Gastrocnemius medialis (tissue), 4 donors: ENCODE measurements at regions of chr2 and their contacts with region 1.

Region 1: GRCh38 chr2:135473567-135473966 is 57.5 kb downstream of the ZRANB3 start:
- DNase-seq: peak in 1 of 2 donors; percentile 24
- ATAC-seq: peak; percentile 60 to 83
- H3K4me3 ChIP-seq: no peak overlapping the region
- H3K27ac ChIP-seq: no peak overlapping the region
- H3K4me1 ChIP-seq: peaks cover 3 to 9% of the 10 kb centered on the region in 2 donors
- H3K27me3 ChIP-seq: no peaks in the 10 kb centered on the region
- CTCF ChIP-seq: peak; percentile 55 to 72 (median 59)
- POLR2A ChIP-seq: no peak

Region 2: GRCh38 chr2:135563793-135564192 is 90.2 kb after region 1 on chr2:
- in situ Hi-C with region 1: loop called in 1 of 4 experiments (anchors 25 kb)
- intact Hi-C with region 1: no loop called
- DNase-seq: no peak
- ATAC-seq: no peak
- H3K4me3 ChIP-seq: no peak overlapping the region
- H3K27ac ChIP-seq: no peak overlapping the region
- H3K4me1 ChIP-seq: peaks cover 3 to 4% of the 10 kb centered on the region in 2 donors
- H3K27me3 ChIP-seq: no peaks in the 10 kb centered on the region
- CTCF ChIP-seq: no peak
- POLR2A ChIP-seq: no peak

Region 3: GRCh38 chr2:135600915-135601314 is 127.3 kb after region 1 on chr2:
- in situ Hi-C with region 1: loop called in 1 of 4 experiments (anchors 25 kb)
- intact Hi-C with region 1: loop called (anchors 2 kb)
- DNase-seq: no peak
- ATAC-seq: no peak
- H3K4me3 ChIP-seq: no peak overlapping the region
- H3K27ac ChIP-seq: no peak overlapping the region
- H3K4me1 ChIP-seq: peaks cover 0 to 6% of the 10 kb centered on the region in 2 donors
- H3K27me3 ChIP-seq: no peaks in the 10 kb centered on the region
- CTCF ChIP-seq: peak in 1 of 5 experiments; percentile 35
- POLR2A ChIP-seq: no peak